Transverse colon (tissue), 4 donors: ENCODE measurements at regions of chr11 and their contacts with region 1.

Region 1: DNA sequence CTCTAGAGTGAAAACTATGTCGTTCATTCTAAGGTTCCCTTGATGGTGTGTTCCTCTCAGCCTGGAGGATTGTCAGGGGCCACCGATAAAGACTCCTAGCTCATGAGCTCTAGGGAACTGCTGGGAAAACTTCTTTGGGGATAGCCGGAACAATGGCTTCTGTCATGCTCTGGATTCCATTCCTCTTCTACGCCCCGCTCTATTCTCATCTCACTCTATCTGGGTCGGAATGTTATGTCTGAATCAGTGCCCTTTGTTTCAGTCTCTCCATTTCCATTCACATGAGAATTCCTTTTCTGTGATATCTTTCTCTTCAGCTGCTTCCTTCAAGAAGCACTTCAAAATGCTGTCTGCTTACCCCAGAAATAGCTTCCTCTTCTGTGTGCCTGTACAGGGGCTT is 16.9 kb upstream of the SLCO2B1 start:
- DNase-seq: no peak
- H3K4me3 ChIP-seq: no peak overlapping the region
- H3K27ac ChIP-seq: no peak overlapping the region
- H3K4me1 ChIP-seq: no peaks in the 10 kb centered on the region
- H3K27me3 ChIP-seq: no peaks in the 10 kb centered on the region
- CTCF ChIP-seq: no peak
- EP300 ChIP-seq: no peak
- POLR2A ChIP-seq: no peak

Region 2: GRCh38 chr11:75214411-75214821 is 80.4 kb after region 1 on chr11:
- in situ Hi-C with region 1: loop called in 1 of 4 experiments (anchors 5 kb)
- intact Hi-C with region 1: no loop called
- DNase-seq: peak; percentile 73
- H3K4me3 ChIP-seq: no peak overlapping the region
- H3K27ac ChIP-seq: no peak overlapping the region
- H3K4me1 ChIP-seq: no peaks in the 10 kb centered on the region
- H3K27me3 ChIP-seq: no peaks in the 10 kb centered on the region
- CTCF ChIP-seq: peak in 3 of 5 experiments; percentile 10 to 19 (median 18)
- EP300 ChIP-seq: no peak
- POLR2A ChIP-seq: no peak

Region 3: GRCh38 chr11:75229476-75229875 is 95.5 kb after region 1 on chr11:
- in situ Hi-C with region 1: no loop called
- intact Hi-C with region 1: no loop called
- DNase-seq: no peak
- H3K4me3 ChIP-seq: no peak overlapping the region
- H3K27ac ChIP-seq: no peak overlapping the region
- H3K4me1 ChIP-seq: no peaks in the 10 kb centered on the region
- H3K27me3 ChIP-seq: no peaks in the 10 kb centered on the region
- CTCF ChIP-seq: no peak
- EP300 ChIP-seq: no peak
- POLR2A ChIP-seq: no peak

Region 4: GRCh38 chr11:75480185-75481175 is 346.5 kb after region 1 on chr11:
- in situ Hi-C with region 1: no loop called
- intact Hi-C with region 1: no loop called
- DNase-seq: no peak
- H3K4me3 ChIP-seq: no peak overlapping the region
- H3K27ac ChIP-seq: no peak overlapping the region
- H3K4me1 ChIP-seq: peaks cover 0 to 9% (median 2%) of the 10 kb centered on the region in 4 donors
- H3K27me3 ChIP-seq: no peaks in the 10 kb centered on the region
- CTCF ChIP-seq: no peak
- EP300 ChIP-seq: no peak
- POLR2A ChIP-seq: no peak

Region 5: DNA sequence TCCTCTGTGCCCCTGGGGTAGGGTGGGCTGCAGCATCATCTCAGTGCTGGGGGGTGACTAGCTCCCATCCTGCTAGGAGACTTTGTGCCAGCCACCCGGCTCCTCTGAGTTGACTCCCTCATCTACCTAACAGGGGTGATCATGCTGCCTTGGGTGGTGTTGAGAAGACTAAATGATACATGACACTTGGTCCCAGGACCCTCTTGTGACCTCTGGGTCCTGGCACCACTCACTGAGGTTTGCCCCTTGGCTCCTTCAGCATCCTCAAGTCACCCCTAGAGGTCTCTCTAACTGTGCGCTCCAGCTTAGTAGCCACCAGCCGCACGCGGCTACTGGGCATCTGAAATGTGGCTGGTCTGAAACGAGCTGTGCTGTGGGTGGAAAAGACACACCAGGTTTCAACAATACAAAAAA is 1464.5 kb after region 1 on chr11:
- in situ Hi-C with region 1: no loop called
- intact Hi-C with region 1: no loop called
- DNase-seq: no peak
- H3K4me3 ChIP-seq: no peak overlapping the region
- H3K27ac ChIP-seq: no peak overlapping the region
- H3K4me1 ChIP-seq: peaks cover 10 to 31% (median 16%) of the 10 kb centered on the region in 4 donors
- H3K27me3 ChIP-seq: no peaks in the 10 kb centered on the region
- CTCF ChIP-seq: peak in 3 of 5 experiments; percentile 12 to 19 (median 14)
- EP300 ChIP-seq: no peak
- POLR2A ChIP-seq: no peak